B cell (primary cell): ENCODE measurements at regions of chr3 and their contacts with region 1.

Region 1: DNA sequence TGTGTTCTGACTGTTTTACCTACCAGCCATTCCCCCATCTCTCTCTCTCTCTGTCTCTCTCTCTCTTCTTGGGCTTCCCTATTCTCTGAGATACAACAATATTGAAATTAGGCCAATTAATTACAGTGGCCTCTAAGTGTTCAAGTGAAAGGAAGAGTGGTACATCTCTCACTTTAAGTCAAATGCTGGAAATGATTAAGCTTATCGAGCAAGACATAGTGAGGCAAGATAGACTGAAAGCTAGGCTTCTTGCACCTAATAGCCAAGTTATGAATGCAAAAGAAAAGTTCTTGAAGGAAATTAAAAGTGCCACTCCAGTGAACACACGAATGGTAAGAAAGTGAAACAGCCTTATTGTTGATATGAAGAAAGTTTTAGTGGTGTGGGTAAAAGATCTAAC is 21.3 kb downstream of the SNRK start:
- DNase-seq: peak; percentile 23
- ATAC-seq: no peak
- H3K4me3 ChIP-seq: peak overlapping the region in 1 of 5 experiments; percentile 9
- H3K4me3 Mint-ChIP-seq: peak overlapping the region; percentile 64
- H3K27ac ChIP-seq: peak overlapping the region in 1 of 2 donors; percentile 79
- H3K27ac Mint-ChIP-seq: peak overlapping the region; percentile 89
- H3K4me1 ChIP-seq: peaks cover 16 to 35% of the 10 kb centered on the region in 2 donors
- H3K4me1 Mint-ChIP-seq: peaks cover 54% of the 10 kb centered on the region
- H3K27me3 ChIP-seq: no peaks in the 10 kb centered on the region
- H3K27me3 Mint-ChIP-seq: no peaks in the 10 kb centered on the region
- CTCF ChIP-seq: no peak

Region 2: DNA sequence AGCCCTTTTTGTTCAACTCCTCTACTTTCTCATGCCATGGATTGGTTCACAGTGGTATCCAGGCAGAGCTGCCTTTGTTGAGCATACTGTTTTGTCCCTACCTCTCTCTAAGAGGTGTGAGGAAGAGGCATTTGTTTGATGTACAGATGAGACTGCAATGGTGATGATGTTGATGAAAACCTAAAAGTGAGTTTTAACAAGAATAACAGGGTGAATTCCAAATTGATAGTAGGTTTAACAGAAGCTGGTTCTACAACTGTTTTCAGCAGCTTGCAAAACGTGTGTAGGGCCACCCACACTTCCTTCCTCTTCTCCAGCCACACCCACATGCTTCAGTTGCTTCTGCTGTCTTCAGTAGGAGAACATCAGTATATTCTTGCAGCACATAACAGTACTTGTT is 11.1 kb before region 1 on chr3:
- CTCF ChIA-PET with region 1: no interaction called
- POLR2A ChIA-PET with region 1: no interaction called
- intact Hi-C with region 1: loop called (anchors 1 kb)
- DNase-seq: peak; percentile 70
- ATAC-seq: peak; percentile 99
- H3K4me3 ChIP-seq: peak overlapping the region in 4 of 5 experiments; percentile 26 to 52 (median 40)
- H3K4me3 Mint-ChIP-seq: peak overlapping the region; percentile 83
- H3K27ac ChIP-seq: peak overlapping the region; percentile 41 to 54
- H3K27ac Mint-ChIP-seq: peak overlapping the region; percentile 91
- H3K4me1 ChIP-seq: peaks cover 60 to 74% of the 10 kb centered on the region in 2 donors
- H3K4me1 Mint-ChIP-seq: peaks cover 66% of the 10 kb centered on the region
- H3K27me3 ChIP-seq: no peaks in the 10 kb centered on the region
- H3K27me3 Mint-ChIP-seq: no peaks in the 10 kb centered on the region
- CTCF ChIP-seq: no peak